Ovary (tissue), 10 donors: ENCODE measurements at regions of chr15 and their contacts with region 1.

Region 1: GRCh38 chr15:84748274-84749110 is at the start of gene ZNF592:
- DNase-seq: peak; percentile 86 to 91 (median 89)
- H3K4me3 ChIP-seq: peak within 1 kb of the TSS; percentile 88
- H3K27ac ChIP-seq: peak within 1 kb of the TSS; percentile 87 to 95
- H3K4me1 ChIP-seq: peaks cover 9% of the 10 kb centered on the region
- H3K27me3 ChIP-seq: no peaks in the 10 kb centered on the region
- CTCF ChIP-seq: peak in 2 of 3 donors; percentile 68 to 76
- EP300 ChIP-seq: no peak
- POLR2A ChIP-seq: peak; percentile 39
- total RNA-seq, gene ZNF592: 10.9 to 37.3 (median 28.5) TPM

Region 2: DNA sequence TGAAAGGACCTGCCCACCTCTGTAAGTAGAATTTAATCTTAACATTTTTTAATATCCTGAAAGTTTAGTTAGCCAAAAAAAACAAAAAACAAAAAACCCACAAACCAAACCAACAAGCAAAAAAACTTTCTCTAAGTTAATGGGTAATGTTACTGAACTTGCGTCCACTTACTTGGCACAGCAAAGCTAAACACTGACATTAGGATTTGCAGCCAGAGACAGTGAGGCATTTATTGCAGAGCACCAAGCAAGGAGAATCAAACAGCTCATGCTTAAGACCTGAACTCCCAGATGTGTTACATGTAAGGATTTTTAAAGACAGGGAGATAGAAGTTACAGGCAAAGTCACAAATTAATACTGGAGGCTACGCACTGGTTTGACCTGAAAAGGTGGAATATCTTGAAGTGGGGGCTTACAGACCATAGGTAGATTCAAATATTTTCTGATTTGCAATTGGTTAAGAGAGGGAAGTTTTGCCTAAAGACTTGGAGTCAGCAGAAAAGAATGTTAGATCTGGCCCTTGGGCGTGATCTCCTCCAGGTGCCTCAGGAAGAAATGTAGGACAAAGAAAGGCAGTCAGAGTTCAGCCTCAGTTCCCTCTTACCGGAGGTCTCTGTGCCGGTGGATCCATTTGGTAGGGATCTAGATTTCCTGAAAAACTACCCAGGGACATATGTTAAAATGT is 889.5 kb before region 1 on chr15:
- intact Hi-C with region 1: no loop called
- DNase-seq: no peak
- H3K4me3 ChIP-seq: no peak overlapping the region
- H3K27ac ChIP-seq: no peak overlapping the region
- H3K4me1 ChIP-seq: peaks cover 12% of the 10 kb centered on the region
- H3K27me3 ChIP-seq: no peaks in the 10 kb centered on the region
- CTCF ChIP-seq: no peak
- EP300 ChIP-seq: no peak
- POLR2A ChIP-seq: no peak

Region 3: DNA sequence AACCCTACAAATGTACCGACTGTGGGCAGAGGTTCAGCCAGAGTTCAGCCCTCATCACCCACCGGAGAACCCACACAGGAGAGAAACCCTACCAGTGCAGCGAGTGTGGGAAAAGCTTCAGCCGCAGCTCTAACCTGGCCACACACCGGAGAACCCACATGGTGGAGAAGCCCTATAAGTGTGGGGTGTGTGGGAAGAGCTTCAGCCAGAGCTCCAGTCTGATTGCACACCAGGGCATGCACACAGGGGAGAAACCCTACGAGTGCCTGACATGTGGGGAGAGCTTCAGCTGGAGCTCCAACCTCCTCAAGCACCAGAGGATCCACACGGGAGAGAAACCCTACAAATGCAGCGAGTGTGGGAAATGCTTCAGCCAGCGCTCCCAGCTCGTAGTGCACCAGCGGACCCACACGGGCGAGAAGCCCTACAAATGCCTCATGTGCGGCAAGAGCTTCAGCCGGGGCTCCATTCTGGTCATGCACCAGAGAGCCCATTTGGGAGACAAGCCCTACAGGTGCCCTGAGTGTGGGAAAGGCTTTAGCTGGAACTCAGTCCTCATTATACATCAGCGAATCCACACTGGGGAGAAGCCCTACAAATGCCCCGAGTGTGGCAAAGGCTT is 127.0 kb before region 1 on chr15:
- intact Hi-C with region 1: loop called in 1 of 4 experiments (anchors 1 kb)
- DNase-seq: peak in 1 of 5 donors; percentile 19
- H3K4me3 ChIP-seq: no peak overlapping the region
- H3K27ac ChIP-seq: no peak overlapping the region
- H3K4me1 ChIP-seq: no peaks in the 10 kb centered on the region
- H3K27me3 ChIP-seq: no peaks in the 10 kb centered on the region
- CTCF ChIP-seq: no peak
- EP300 ChIP-seq: no peak
- POLR2A ChIP-seq: no peak

Region 4: DNA sequence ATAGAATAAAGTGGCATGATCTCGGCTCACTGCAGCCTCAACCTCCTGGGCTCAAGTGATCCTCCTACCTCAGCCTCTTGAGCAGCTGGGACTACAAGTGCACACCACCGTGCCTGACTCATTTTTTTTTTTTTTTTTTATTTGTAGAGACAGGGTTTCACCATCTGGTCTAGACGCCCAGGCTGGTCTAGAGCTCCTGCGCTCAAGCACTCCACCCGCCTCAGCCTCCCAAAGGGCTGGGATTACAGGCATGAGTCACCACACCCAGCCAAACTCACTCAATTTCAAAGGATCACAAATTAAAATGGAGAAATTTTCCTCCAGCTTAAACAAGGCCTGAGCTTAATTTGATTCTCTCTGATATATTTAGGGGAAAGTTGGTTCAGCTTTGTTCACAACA is 63.2 kb before region 1 on chr15:
- intact Hi-C with region 1: loop called in 1 of 4 experiments (anchors 10 kb)
- DNase-seq: no peak
- H3K4me3 ChIP-seq: no peak overlapping the region
- H3K27ac ChIP-seq: no peak overlapping the region
- H3K4me1 ChIP-seq: no peaks in the 10 kb centered on the region
- H3K27me3 ChIP-seq: no peaks in the 10 kb centered on the region
- CTCF ChIP-seq: no peak
- EP300 ChIP-seq: no peak
- POLR2A ChIP-seq: no peak

Region 5: DNA sequence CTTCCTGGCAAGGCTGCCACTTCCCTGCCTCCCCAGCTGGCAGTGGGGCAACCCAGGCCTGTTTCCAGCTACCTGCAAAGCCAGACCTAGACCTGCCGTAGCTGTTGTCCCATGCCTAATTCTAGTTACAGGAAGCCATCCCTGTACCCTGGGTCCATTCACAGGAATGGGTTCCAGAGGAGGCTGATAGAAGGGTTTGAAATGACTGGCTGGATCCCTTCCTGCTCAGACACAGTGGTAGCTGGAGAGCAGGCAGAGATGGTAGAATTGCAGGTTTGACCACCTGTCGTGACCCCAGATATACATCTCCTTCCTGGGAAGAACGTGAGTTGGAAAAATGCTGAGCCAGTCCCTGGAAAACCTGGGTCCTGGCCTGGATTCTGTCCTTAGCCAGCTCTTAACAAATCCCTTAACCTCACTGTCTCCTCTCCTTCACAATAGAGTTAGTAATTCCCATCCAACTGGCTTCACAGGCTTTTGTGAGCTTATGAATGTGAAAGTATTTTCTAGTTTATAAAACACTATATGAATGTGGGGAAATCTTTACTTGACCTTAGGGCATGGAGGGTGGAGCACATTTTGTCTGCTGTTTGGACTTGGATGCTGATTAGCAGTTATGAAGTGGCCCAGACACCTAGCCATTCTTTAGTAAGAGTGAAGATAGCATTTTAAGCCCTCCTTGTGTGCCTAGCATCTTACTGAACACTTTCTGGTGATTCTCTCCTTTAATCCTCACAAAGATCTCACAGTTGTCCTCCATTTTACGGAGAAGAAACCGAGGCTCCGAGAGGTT is 55.8 kb after region 1 on chr15:
- intact Hi-C with region 1: no loop called
- DNase-seq: no peak
- H3K4me3 ChIP-seq: no peak overlapping the region
- H3K27ac ChIP-seq: no peak overlapping the region
- H3K4me1 ChIP-seq: no peaks in the 10 kb centered on the region
- H3K27me3 ChIP-seq: no peaks in the 10 kb centered on the region
- CTCF ChIP-seq: no peak
- EP300 ChIP-seq: no peak
- POLR2A ChIP-seq: no peak

Region 6: DNA sequence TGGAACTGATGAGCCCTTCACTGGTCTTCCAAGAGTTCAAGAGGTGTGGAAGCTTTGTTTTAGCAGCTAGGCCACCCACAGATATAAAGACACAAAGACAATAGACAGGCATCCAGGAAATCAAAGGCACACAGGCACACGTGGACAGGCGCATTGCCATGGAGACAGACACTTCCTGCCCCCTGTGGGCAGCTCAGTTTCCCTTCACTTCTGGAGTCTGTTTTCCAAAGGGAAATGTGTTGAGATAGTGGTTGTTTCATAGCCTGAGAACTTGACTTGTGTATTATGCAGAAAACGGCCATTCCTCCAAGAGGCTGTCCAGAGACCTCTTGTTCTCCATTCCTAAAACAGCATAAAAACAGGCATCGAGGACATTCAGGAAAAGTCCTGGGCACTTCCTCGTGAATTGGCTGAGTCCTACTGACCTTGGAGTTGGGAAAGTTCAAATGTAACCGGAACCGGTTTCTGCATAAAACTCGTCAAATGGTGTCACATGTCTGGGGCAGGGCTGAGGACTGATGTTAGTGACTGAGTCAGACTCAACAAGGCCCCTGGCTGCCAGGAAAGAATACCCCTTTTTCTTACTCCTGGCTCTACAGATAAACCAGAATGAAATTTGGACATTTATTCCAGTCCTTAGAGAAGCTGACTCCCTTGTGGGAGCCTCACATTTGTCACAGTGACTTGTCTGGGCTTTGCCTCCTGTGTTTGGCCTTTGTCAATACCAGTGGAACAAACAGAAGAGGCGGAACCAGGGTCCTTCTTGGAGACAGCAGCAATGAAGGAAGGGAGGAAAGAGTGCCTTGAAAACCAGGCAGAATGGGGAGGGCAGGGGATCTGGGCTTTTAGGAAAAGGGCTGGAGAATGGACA is 70.0 kb after region 1 on chr15:
- intact Hi-C with region 1: loop called in 3 of 4 experiments (anchors 5 to 10 kb)
- DNase-seq: peak in 1 of 5 donors; percentile 16
- H3K4me3 ChIP-seq: no peak overlapping the region
- H3K27ac ChIP-seq: peak overlapping the region in 1 of 2 donors; percentile 29
- H3K4me1 ChIP-seq: peaks cover 11% of the 10 kb centered on the region
- H3K27me3 ChIP-seq: no peaks in the 10 kb centered on the region
- CTCF ChIP-seq: no peak
- EP300 ChIP-seq: no peak
- POLR2A ChIP-seq: no peak

Region 7: GRCh38 chr15:84826369-84826823 is 77.9 kb after region 1 on chr15:
- intact Hi-C with region 1: loop called in 1 of 4 experiments (anchors 5 kb)
- DNase-seq: peak in 2 of 5 donors; percentile 34 to 57
- H3K4me3 ChIP-seq: no peak overlapping the region
- H3K27ac ChIP-seq: peak overlapping the region in 1 of 2 donors; percentile 55
- H3K4me1 ChIP-seq: peaks cover 24% of the 10 kb centered on the region
- H3K27me3 ChIP-seq: no peaks in the 10 kb centered on the region
- CTCF ChIP-seq: no peak
- EP300 ChIP-seq: no peak
- POLR2A ChIP-seq: no peak

Region 8: GRCh38 chr15:84915011-84915958 is 166.8 kb after region 1 on chr15:
- intact Hi-C with region 1: loop called in 2 of 4 experiments (anchors 10 kb)
- DNase-seq: peak; percentile 57 to 74 (median 58)
- H3K4me3 ChIP-seq: no peak overlapping the region
- H3K27ac ChIP-seq: peak overlapping the region; percentile 54 to 60
- H3K4me1 ChIP-seq: peaks cover 18% of the 10 kb centered on the region
- H3K27me3 ChIP-seq: no peaks in the 10 kb centered on the region
- CTCF ChIP-seq: no peak
- EP300 ChIP-seq: no peak
- POLR2A ChIP-seq: no peak

Region 9: DNA sequence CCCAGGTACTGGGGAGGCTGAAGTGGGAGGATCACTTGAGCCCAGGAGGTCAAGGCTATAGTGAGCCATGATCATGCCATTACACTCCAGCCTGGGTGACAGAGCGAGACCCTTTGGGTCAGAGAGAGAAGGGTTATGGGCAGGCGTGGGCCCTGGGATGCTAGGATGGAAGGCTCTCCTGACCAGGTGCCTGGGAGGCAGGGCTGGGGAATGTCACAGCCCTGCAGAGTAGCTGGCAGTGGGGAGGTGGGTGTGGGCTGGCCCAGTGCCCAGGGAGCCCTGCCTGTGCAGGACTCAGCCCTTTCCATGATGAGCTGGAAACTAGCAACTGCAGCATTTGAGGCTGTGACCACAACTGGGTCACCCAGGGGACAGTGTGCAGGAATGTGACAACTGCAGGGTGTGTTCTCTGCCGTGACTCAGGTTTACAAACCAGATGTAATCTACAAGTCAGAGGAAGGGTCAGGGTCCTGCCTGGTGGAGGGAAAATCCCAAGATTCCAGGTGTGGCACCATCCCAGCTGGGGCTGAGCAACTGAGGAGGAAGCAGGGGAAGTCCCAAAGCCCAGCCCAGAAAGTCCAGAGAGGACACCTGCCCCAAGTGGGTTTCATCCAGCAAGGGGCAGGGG is 181.4 kb after region 1 on chr15:
- intact Hi-C with region 1: loop called in 1 of 4 experiments (anchors 10 kb)
- DNase-seq: no peak
- H3K4me3 ChIP-seq: no peak overlapping the region
- H3K27ac ChIP-seq: no peak overlapping the region
- H3K4me1 ChIP-seq: peaks cover 2% of the 10 kb centered on the region
- H3K27me3 ChIP-seq: no peaks in the 10 kb centered on the region
- CTCF ChIP-seq: no peak
- EP300 ChIP-seq: no peak
- POLR2A ChIP-seq: no peak

Region 10: DNA sequence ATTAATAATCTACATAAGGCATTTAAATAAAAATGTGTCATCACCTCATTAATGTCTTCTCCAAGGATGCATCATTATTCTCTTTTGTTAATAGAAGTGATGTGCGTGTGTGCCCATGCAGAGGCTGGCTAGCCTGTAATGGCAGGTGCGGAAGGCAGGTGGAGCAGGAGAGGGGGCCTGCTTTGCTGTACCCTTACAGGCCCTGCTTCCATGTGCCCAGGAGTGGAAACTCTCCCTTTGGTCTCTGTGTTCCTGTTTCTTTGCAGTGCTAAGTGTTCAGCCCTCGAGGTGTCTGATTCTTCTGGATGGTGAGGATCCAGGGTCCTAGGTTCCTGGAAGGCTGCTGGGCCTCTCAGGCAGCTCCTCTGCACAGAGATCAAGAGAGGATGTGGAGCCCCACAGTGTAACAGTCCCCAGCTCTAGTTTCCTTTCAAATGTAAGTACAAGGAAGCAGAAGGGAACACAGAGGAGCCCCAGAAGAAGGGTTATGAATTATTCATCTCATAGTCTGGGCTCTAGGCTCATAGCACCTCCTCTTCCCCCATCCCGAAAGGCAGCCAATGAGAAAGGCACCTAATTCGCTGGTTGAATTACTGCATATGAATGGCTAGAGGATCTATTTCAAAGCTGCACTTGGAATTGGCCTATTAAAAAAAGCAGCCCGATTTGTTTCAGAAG is 1292.0 kb after region 1 on chr15:
- intact Hi-C with region 1: no loop called
- DNase-seq: no peak
- H3K4me3 ChIP-seq: no peak overlapping the region
- H3K27ac ChIP-seq: no peak overlapping the region
- H3K4me1 ChIP-seq: no peaks in the 10 kb centered on the region
- H3K27me3 ChIP-seq: no peaks in the 10 kb centered on the region
- CTCF ChIP-seq: no peak
- EP300 ChIP-seq: no peak
- POLR2A ChIP-seq: no peak